Posterior vena cava (tissue), 2 donors: ENCODE measurements at regions of chr21 and their contacts with region 1.

Region 1: DNA sequence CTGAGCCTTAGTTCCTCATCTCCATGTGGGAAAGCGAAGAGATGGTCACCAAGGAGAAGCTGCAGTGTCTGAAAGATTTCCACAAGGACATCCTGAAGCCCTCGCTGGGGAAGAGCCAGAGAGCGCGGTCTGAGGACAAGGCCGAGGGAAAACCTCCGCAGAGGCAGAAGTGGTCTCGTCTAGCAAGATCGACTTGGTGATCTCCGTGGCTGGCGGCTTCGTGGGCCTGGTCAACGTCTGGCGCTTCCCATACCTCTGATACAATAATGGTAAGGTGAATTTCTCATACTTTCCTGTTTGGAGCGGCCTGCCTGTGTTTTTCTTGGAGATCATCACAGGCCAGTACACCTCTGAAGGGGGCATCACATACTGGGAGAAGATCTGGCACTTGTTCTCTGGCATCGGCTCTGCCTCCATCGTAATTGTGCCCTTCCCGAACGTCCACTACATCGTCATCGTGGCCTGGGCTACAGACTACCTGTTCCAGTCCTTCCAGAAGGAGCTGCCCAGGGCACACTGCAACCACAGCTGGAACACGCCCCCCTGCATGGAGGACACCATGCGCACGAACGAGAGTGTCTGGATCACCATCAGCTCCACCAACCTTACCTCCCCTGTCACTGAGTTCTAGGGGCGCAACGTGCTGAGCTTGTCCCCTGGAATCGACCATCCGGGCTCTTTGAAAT is 841.1 kb upstream of the TMPRSS15 start:
- DNase-seq: peak; percentile 78

Region 2: DNA sequence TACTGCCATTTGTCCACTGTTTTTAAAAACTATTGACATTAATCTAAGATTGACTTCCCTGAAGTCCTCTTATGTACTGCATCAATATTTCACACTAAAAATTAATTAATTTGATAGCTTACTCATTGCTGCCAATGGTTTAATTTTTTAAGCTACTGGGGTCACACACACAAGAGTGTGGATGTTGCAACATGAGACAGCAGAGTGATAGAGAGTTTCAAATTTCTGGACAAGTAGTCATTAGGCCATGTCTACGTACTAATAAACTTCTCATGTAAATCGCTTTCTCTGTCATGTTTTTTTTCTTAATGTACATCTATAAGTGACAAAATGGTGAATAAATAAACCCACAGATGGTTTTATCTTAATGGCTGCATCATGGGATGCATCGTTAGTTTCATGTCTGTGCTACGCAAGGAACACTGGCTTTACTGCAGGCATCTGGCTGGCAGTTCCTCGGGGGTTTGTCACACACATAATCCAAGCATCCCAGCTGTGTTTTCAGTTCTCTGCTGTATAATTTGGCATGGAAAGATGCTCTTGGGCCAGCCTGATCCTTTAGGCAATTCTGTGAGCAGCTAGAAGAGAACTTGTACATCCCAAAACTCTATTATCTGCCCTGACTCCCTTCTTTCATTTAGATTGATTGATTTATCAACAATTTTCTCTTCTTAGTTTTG is 1016.4 kb before region 1 on chr21:
- intact Hi-C with region 1: no loop called
- DNase-seq: no peak

Region 3: DNA sequence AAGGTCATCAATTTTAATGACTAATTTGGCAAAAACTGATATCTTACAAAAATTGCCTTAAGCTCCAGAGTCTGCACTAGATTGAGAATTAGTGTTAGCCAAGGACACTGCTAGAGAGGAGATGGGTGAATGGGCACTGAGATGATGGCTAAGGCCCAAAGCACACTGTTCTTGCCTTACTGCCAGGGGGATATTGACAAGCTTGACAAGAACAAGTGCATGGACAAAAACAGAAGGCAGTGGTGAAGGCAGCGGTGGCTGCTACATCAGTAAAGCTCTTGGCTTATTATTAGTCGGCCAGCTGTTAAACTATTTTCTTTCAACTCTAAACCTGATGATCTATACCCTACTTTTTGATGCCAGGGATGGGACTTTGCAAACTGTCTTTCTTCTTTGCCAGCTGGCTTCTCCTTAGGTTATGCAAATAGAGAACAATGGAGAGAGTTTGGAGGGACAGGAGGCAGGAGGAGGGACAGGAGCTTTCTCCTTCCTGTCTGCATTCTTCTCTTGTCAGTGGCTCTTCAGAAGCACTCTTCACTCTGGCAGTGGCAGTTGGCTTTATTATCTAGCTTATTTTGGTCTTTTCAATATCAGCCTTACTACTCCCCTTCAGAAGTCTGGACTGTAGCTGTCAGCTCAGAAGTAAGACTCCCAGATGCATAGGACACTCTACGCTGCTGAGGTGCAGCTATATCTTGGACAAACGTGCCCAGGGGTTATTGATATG is 12.5 kb after region 1 on chr21:
- intact Hi-C with region 1: loop called in 1 of 2 experiments (anchors 1 kb)
- DNase-seq: no peak